Adrenal gland (tissue), 19 donors: ENCODE measurements at regions of chr2 and their contacts with region 1.

Region 1: DNA sequence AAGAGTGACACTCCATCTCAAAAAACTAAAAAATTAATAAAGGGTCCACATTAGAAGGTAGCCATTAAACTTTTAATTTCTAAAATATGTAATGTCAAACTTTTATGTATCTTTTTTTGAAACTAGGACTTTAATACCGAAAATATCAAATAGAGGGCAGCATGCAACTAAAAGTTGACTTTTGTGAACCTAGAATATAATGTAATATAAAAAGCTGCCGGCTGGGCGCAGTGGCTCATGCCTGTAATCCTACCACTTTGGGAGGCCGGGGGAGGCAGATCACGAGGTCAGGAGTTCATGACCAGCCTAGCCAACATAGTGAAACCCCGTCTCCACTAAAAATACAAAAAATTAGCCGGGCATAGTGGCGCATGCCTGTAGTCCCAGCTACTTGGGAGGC is 62.8 kb downstream of the INO80D start:
- DNase-seq: peak in 5 of 7 donors; percentile 29 to 60 (median 35)
- H3K4me3 ChIP-seq: no peak overlapping the region
- H3K27ac ChIP-seq: no peak overlapping the region
- H3K4me1 ChIP-seq: no peaks in the 10 kb centered on the region
- H3K27me3 ChIP-seq: no peaks in the 10 kb centered on the region
- CTCF ChIP-seq: peak in 5 of 6 experiments; percentile 17 to 53 (median 43)
- POLR2A ChIP-seq: no peak

Region 2: DNA sequence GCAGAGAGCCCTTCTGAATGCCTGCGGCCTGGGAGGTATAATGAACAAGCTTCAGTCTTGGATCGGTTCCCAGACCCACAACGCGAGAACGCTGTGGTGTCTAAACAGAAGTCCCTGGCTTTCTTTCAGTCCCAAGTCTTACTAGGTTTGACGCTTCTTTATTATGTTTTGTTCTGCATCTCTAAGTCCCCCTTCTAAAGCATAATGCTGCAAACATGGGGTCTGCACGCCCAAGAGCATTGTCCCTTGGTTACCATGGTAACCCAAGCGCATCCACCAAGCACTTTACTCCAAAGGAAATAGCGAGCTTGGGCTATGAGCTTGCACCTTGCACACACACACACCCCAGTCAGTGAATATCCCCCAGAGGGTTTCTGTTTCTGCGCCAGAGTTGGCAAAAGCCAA is 130.9 kb before region 1 on chr2:
- intact Hi-C with region 1: no loop called
- DNase-seq: peak in 1 of 7 donors; percentile 62
- H3K4me3 ChIP-seq: no peak overlapping the region
- H3K27ac ChIP-seq: no peak overlapping the region
- H3K4me1 ChIP-seq: no peaks in the 10 kb centered on the region
- H3K27me3 ChIP-seq: no peaks in the 10 kb centered on the region
- CTCF ChIP-seq: no peak
- POLR2A ChIP-seq: no peak

Region 3: GRCh38 chr2:206085742-206086445 is 62.7 kb after region 1 on chr2 and contains the start of gene INO80D:
- intact Hi-C with region 1: loop called in 1 of 2 experiments (anchors 10 kb)
- DNase-seq: peak; percentile 70 to 90 (median 82)
- H3K4me3 ChIP-seq: peak within 1 kb of the TSS; percentile 75 to 91 (median 88)
- H3K27ac ChIP-seq: peak within 1 kb of the TSS; percentile 87 to 100 (median 98)
- H3K4me1 ChIP-seq: peaks cover 4 to 36% of the 10 kb centered on the region in 2 donors
- H3K27me3 ChIP-seq: no peaks in the 10 kb centered on the region
- CTCF ChIP-seq: peak in 5 of 6 experiments; percentile 48 to 67 (median 53)
- POLR2A ChIP-seq: peak; percentile 51 to 84
- total RNA-seq, gene INO80D: 10.2 to 24.6 (median 18.0) TPM

Region 4: DNA sequence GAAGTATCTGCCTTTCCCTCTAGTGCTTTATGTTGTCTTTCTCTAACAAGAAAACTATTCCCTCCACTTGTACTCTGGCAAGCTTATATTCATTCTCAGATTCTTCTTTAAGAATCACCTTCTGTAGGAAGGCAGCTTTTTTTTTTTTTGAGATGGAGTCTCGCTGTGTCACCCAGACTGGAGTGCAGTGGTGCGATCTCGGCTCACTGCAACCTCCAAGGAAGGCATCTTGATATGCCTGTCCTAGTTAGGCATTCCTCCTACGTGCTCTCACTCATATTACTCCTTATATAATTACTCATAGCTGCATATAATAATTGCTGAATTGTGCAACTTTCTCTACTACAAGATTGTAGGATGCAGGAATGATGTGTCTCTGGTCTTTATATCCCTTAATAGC is 120.3 kb after region 1 on chr2:
- intact Hi-C with region 1: loop called in 1 of 2 experiments (anchors 10 kb)
- DNase-seq: no peak
- H3K4me3 ChIP-seq: no peak overlapping the region
- H3K27ac ChIP-seq: no peak overlapping the region
- H3K4me1 ChIP-seq: no peaks in the 10 kb centered on the region
- H3K27me3 ChIP-seq: no peaks in the 10 kb centered on the region
- CTCF ChIP-seq: no peak
- POLR2A ChIP-seq: no peak

Region 5: GRCh38 chr2:206159346-206160124 is 136.4 kb after region 1 on chr2 and contains the starts of genes EEF1B2 and NDUFS1:
- intact Hi-C with region 1: loop called in 1 of 2 experiments (anchors 10 kb)
- DNase-seq: peak; percentile 97 to 99 (median 98)
- H3K4me3 ChIP-seq: peak within 1 kb of the TSS; percentile 56 to 91 (median 60)
- H3K27ac ChIP-seq: peak within 1 kb of the TSS; percentile 89 to 96 (median 94)
- H3K4me1 ChIP-seq: peaks cover 19 to 47% of the 10 kb centered on the region in 2 donors
- H3K27me3 ChIP-seq: no peaks in the 10 kb centered on the region
- CTCF ChIP-seq: no peak
- POLR2A ChIP-seq: peak in 1 of 2 donors; percentile 75
- total RNA-seq, gene EEF1B2: 351 to 663 (median 430) TPM
- total RNA-seq, gene NDUFS1: 128 to 241 (median 196) TPM